Ovary (tissue), 10 donors: ENCODE measurements at regions of chr1 and their contacts with region 1.

Region 1: DNA sequence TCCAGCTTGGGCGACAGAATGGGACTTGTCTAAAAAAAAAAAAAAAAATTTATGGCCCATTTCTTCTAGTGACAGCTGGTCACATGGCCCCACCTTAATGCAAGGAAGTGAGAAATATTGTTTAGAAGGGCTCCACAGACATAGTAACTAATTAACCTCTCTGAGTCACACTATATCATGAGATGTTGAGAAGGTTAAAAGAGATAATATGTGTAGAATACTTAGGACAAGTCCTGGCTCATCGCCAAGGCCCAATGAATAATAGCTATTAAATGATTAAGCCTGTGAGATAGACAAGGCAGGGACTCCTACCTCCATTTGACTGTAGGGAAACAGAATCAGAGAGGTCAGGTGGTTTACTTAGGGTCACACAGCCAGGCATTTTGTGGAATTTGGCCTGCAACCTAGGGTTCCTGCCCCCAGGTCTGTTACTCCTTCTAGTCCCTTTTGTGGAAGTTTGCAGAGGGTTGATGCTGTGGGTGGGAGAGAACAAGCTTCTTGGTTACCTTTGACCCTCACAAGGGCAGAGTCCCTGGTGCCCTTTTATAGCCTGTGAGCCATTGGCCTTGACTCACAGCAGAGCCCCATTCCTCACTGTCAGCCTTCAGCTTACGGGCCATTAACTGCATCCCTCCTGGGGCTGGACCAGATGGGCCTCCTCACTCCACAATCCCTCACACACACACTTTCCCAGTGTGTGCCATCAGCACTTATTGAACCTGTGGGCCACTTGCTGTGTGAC is 48.5 kb downstream of the OPRD1 start:
- DNase-seq: no peak
- H3K4me3 ChIP-seq: no peak overlapping the region
- H3K27ac ChIP-seq: no peak overlapping the region
- H3K4me1 ChIP-seq: no peaks in the 10 kb centered on the region
- H3K27me3 ChIP-seq: no peaks in the 10 kb centered on the region
- CTCF ChIP-seq: no peak
- EP300 ChIP-seq: no peak
- POLR2A ChIP-seq: no peak

Region 2: GRCh38 chr1:28591708-28592320 is 268.7 kb before region 1 on chr1 and contains the start of gene RAB42:
- intact Hi-C with region 1: no loop called
- DNase-seq: peak in 4 of 5 donors; percentile 27 to 56 (median 37)
- H3K4me3 ChIP-seq: peak within 1 kb of the TSS; percentile 38
- H3K27ac ChIP-seq: no peak within 1 kb of the TSS
- H3K4me1 ChIP-seq: peaks cover 2% of the 10 kb centered on the region
- H3K27me3 ChIP-seq: no peaks in the 10 kb centered on the region
- CTCF ChIP-seq: no peak
- EP300 ChIP-seq: no peak
- POLR2A ChIP-seq: no peak
- total RNA-seq, gene RAB42: 0.36 to 4.2 (median 0.89) TPM in 6 of 7 donors, not detected in the other

Region 3: DNA sequence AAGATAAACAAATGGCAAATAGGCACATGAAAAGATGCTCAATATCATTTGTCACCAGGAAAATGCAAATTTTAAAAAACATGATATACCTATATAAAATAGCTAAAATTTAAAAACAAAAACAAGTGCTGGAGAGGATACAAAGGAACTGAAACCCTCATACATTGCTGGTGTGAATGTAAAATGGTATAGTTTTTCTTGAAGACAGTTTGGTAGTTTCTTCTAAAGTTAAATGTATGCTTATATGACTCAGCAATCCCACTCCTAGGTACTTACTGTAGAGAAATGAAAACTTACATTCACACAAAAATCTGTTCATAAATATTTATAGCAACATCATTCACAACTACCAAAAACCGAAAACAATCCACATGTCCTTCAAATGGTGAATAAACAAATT is 228.8 kb before region 1 on chr1:
- intact Hi-C with region 1: loop called in 1 of 4 experiments (anchors 10 kb)
- DNase-seq: no peak
- H3K4me3 ChIP-seq: no peak overlapping the region
- H3K27ac ChIP-seq: no peak overlapping the region
- H3K4me1 ChIP-seq: no peaks in the 10 kb centered on the region
- H3K27me3 ChIP-seq: no peaks in the 10 kb centered on the region
- CTCF ChIP-seq: no peak
- EP300 ChIP-seq: no peak
- POLR2A ChIP-seq: no peak

Region 4: DNA sequence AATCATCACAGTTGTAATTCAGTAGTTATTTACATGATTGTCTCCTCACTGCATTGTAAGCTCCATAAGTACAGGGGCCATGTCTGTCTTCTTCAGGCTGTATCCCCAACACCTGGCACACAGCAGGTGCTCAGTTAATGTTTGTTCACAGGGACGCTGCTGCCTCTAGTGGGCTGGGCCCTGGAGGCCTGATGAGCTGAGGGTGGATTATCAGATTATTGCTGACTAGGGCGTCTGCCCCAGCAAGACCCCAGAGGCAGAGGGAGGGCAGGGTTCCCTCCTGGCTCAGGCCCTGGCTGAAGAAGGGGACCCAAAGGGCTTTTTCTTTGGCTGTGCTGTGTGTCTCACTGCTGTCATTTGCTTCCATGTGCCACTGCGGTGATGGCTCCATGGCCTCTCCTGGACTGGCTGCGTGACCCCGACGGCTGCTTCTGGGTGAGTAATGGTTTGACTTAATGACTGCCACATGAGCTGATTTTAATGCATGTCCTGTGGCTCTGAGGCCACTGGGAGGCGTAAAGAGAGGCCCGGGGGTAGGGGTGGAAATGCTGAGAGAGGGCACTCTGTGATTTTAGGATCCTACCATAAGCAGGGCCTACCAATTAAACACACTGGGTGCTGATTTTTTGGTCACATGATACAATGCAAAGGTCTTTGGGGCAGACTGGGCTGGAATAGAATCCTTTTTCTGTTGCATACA is 33.0 kb after region 1 on chr1:
- intact Hi-C with region 1: no loop called
- DNase-seq: no peak
- H3K4me3 ChIP-seq: no peak overlapping the region
- H3K27ac ChIP-seq: no peak overlapping the region
- H3K4me1 ChIP-seq: peaks cover 2% of the 10 kb centered on the region
- H3K27me3 ChIP-seq: no peaks in the 10 kb centered on the region
- CTCF ChIP-seq: no peak
- EP300 ChIP-seq: no peak
- POLR2A ChIP-seq: no peak

Region 5: GRCh38 chr1:28905921-28906666 is 45.6 kb after region 1 on chr1:
- intact Hi-C with region 1: no loop called
- DNase-seq: no peak
- H3K4me3 ChIP-seq: no peak overlapping the region
- H3K27ac ChIP-seq: no peak overlapping the region
- H3K4me1 ChIP-seq: no peaks in the 10 kb centered on the region
- H3K27me3 ChIP-seq: no peaks in the 10 kb centered on the region
- CTCF ChIP-seq: no peak
- EP300 ChIP-seq: no peak
- POLR2A ChIP-seq: no peak

Region 6: GRCh38 chr1:29083317-29084195 is 223.1 kb after region 1 on chr1:
- intact Hi-C with region 1: no loop called
- DNase-seq: no peak
- H3K4me3 ChIP-seq: peak overlapping the region; percentile 24
- H3K27ac ChIP-seq: no peak overlapping the region
- H3K4me1 ChIP-seq: no peaks in the 10 kb centered on the region
- H3K27me3 ChIP-seq: no peaks in the 10 kb centered on the region
- CTCF ChIP-seq: no peak
- EP300 ChIP-seq: no peak
- POLR2A ChIP-seq: no peak